Activated CD4-positive, alpha-beta memory T cell treated with anti-CD3 and anti-CD28 coated beads for 36 hours (primary cell): ENCODE measurements at regions of chr3 and their contacts with region 1.

Region 1: DNA sequence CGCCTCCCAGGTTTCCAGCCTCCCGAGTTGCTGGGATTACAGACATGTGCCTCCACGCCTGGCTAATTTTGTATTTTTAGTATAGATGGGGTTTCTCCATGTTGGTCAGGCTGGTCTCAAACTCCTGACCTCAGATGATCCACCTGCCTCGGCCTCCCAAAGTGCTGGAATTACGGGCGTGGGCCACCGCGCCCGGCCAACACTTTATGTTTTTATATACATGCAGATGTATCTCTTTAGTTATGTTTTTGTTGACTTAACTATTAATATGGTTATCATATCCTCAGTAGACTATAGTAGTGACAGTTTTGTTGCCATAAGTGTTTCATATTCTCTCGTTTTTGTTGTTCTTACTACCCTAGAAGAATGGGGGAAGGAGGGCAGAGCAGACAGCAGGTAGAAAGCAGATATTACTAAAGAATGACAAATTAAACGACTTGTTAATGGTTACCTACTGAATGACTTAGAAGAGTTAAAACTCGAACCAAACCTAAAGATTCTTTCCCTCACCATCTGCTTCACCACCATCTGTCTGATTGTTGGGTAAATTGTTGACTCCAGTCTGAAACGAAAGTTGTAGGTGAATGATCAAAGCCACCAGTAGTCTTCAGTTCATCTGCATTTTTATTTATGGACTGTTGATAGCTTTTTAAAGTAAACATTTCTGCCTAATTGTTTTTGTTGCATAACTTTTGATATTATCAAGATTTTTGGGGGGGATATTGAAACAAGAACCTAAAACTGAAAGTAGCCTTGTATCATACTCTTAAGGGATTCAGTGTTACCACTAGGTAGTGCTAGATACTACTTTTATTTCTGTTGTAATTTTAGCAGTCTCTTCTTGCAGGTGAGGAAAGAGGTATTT is 89.3 kb downstream of the RASA2 start:
- DNase-seq: no peak
- H3K4me3 Mint-ChIP-seq: peak overlapping the region; percentile 5
- H3K27ac Mint-ChIP-seq: peak overlapping the region; percentile 53
- H3K4me1 Mint-ChIP-seq: peaks cover 15% of the 10 kb centered on the region
- H3K27me3 Mint-ChIP-seq: no peaks in the 10 kb centered on the region

Region 2: GRCh38 chr3:141530133-141530768 is 45.9 kb before region 1 on chr3:
- CTCF ChIA-PET with region 1: no interaction called
- POLR2A ChIA-PET with region 1: no interaction called
- intact Hi-C with region 1: no loop called
- DNase-seq: peak; percentile 40
- H3K4me3 Mint-ChIP-seq: no peak overlapping the region
- H3K27ac Mint-ChIP-seq: peak overlapping the region; percentile 56
- H3K4me1 Mint-ChIP-seq: peaks cover 70% of the 10 kb centered on the region
- H3K27me3 Mint-ChIP-seq: no peaks in the 10 kb centered on the region

Region 3: DNA sequence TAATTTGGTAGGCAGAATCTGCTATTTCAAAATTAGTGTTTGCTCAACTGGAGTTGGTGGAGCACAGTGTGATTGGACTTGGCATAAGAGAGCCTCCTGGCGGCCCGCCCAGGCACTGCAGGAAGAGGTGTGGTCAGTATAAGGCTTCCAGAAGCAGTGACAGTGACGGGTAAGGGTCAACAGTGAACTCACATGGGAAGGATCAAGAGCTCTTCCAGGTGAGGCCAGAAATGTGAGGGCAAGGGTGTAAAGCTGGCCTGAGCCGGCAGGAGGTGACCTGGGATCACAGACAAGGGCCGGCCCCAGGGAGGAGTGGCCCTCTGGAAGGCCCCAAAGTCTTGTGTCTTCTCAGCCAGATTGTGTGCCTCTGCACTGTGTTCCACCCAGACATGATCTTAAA is 68.8 kb after region 1 on chr3:
- CTCF ChIA-PET with region 1: interaction called, 3 read pairs
- POLR2A ChIA-PET with region 1: no interaction called
- intact Hi-C with region 1: loop called (anchors 10 kb)
- DNase-seq: peak; percentile 86
- H3K4me3 Mint-ChIP-seq: no peak overlapping the region
- H3K27ac Mint-ChIP-seq: no peak overlapping the region
- H3K4me1 Mint-ChIP-seq: no peaks in the 10 kb centered on the region
- H3K27me3 Mint-ChIP-seq: no peaks in the 10 kb centered on the region

Region 4: GRCh38 chr3:141913150-141913811 is 337.2 kb after region 1 on chr3:
- CTCF ChIA-PET with region 1: no interaction called
- POLR2A ChIA-PET with region 1: no interaction called
- intact Hi-C with region 1: loop called (anchors 10 kb)
- DNase-seq: peak; percentile 63
- H3K4me3 Mint-ChIP-seq: no peak overlapping the region
- H3K27ac Mint-ChIP-seq: no peak overlapping the region
- H3K4me1 Mint-ChIP-seq: peaks cover 5% of the 10 kb centered on the region
- H3K27me3 Mint-ChIP-seq: no peaks in the 10 kb centered on the region